K562 (cell line): ENCODE measurements at regions of chr2 and their contacts with region 1.

Region 1: GRCh38 chr2:32553829-32554432 is 73.9 kb upstream of the TTC27 start:
- DNase-seq: peak; percentile 35 to 61 (median 47)
- ATAC-seq: peak; percentile 93
- H3K4me3 ChIP-seq: no peak overlapping the region
- H3K27ac ChIP-seq: no peak overlapping the region
- H3K4me1 ChIP-seq: no peaks in the 10 kb centered on the region
- H3K27me3 ChIP-seq: no peaks in the 10 kb centered on the region
- CTCF ChIP-seq: peak; percentile 36 to 80 (median 44); a peak in 4 of 6 replicates
- EP300 ChIP-seq: no peak
- POLR2A ChIP-seq: no peak
- RAD21 ChIP-seq: peak; percentile 75 to 86

Region 2: DNA sequence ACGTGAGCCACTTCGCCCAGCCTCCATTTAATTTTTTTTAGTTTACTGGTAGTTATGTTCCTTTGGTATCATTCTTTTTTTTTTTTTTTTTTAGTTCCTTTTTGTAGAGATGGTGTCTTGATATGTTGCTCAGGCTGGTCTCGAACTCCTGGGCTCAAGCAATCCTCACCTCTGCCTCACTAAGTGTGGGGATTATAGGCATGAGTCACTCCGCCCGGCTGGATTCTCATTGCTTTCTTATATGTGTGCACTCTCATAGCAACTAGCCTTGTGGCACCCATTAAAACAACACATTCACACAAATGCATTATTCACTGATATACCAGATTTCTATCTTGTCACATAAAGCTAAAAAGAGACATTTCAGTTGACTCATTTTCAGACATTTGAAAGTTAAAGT is 78.2 kb after region 1 on chr2:
- CTCF ChIA-PET with region 1: no interaction called
- POLR2A ChIA-PET with region 1: no interaction called
- in situ Hi-C with region 1: no loop called
- intact Hi-C with region 1: loop called (anchors 5 kb)
- DNase-seq: peak in 3 of 4 experiments; percentile 20 to 75 (median 53)
- ATAC-seq: peak; percentile 32
- H3K4me3 ChIP-seq: no peak overlapping the region
- H3K27ac ChIP-seq: peak overlapping the region; percentile 19; the same call in 1 of the 3 replicates
- H3K4me1 ChIP-seq: peaks cover 13 to 17% of the 10 kb centered on the region in 2 experiments; a peak in 3 of 5 replicates
- H3K27me3 ChIP-seq: no peaks in the 10 kb centered on the region
- CTCF ChIP-seq: no peak
- EP300 ChIP-seq: no peak
- POLR2A ChIP-seq: no peak
- RAD21 ChIP-seq: no peak

Region 3: DNA sequence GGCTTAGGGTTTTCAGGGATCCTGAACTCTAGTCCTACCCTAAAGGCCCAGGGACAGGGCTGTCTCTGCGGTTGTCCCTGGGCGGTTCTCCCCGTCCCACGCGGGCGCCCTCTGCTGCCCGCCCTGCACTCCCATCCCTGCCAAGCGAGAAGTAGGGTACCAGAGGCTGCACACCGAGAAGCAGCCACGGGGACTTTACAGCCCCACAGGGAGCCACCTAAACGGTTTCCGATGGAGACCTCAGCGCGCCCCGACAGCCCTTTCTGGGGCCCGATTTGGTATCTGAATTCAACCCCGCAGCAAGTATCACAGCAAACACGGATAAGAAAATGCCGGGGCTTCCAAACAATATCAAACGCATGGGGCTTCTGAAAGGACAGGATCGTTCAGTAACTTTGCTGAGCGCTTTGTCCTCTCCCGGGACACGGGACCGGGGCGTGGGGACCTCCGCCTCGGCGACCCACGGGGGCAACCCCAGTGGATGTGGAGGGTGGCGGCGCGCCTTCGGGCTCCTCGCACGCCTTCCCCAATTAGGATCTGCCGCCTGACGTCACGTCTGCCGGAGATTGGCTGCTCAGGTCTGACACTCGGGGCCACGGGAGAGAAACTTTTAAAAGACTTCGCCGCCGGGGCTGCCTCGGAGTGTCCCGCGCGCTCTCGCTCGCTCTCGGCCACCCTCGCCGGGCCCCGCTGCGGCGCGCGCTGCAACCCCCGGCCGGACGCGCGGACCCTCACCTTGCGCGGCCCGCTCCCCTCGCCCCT is 392.6 kb after region 1 on chr2 and contains the start of gene LTBP1:
- CTCF ChIA-PET with region 1: no interaction called
- POLR2A ChIA-PET with region 1: no interaction called
- in situ Hi-C with region 1: no loop called
- intact Hi-C with region 1: loop called (anchors 2 kb)
- DNase-seq: peak; percentile 70 to 85 (median 77)
- ATAC-seq: peak; percentile 88
- H3K4me3 ChIP-seq: peak within 1 kb of the TSS; percentile 64
- H3K27ac ChIP-seq: peak within 1 kb of the TSS; percentile 70
- H3K4me1 ChIP-seq: peaks cover 27 to 29% of the 10 kb centered on the region in 2 experiments; a peak in 4 of 5 replicates
- H3K27me3 ChIP-seq: no peaks in the 10 kb centered on the region
- CTCF ChIP-seq: peak; percentile 79 to 92 (median 84)
- EP300 ChIP-seq: no peak
- POLR2A ChIP-seq: no peak
- RAD21 ChIP-seq: peak; percentile 74 to 82
- polyA plus RNA-seq, gene LTBP1: 4.3 to 5.2 TPM

Region 4: DNA sequence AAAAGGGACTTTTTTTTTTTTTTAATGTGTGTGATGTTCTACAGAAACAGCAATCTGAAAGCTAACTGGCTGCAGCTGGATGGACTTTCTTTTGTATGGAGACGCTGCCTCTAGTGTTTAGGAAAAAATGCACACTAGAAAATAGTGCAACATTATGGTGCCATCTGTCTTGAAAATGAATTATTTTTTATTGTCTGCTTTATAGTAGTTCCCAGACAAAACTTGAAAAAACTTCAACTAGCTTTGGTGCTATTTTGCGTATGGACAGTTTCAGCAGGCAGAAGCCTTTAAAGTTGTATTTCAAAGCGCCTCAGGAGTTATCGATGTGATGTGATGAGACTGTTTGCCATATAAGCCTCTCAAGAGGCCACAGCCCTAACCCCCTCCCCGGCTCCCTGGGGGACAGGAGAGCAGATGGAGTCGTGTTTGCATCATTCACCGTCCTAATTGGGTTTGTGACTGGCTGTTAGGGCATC is 479.7 kb after region 1 on chr2:
- CTCF ChIA-PET with region 1: interaction called, 14 read pairs
- POLR2A ChIA-PET with region 1: no interaction called
- in situ Hi-C with region 1: no loop called
- intact Hi-C with region 1: loop called (anchors 1 kb)
- DNase-seq: peak in 1 of 4 experiments; percentile 38
- ATAC-seq: peak; percentile 87
- H3K4me3 ChIP-seq: no peak overlapping the region
- H3K27ac ChIP-seq: no peak overlapping the region
- H3K4me1 ChIP-seq: no peaks in the 10 kb centered on the region; a peak in 1 of 5 replicates
- H3K27me3 ChIP-seq: no peaks in the 10 kb centered on the region
- CTCF ChIP-seq: peak; percentile 61 to 99 (median 97)
- EP300 ChIP-seq: no peak
- POLR2A ChIP-seq: no peak
- RAD21 ChIP-seq: peak; percentile 78 to 88

Region 5: DNA sequence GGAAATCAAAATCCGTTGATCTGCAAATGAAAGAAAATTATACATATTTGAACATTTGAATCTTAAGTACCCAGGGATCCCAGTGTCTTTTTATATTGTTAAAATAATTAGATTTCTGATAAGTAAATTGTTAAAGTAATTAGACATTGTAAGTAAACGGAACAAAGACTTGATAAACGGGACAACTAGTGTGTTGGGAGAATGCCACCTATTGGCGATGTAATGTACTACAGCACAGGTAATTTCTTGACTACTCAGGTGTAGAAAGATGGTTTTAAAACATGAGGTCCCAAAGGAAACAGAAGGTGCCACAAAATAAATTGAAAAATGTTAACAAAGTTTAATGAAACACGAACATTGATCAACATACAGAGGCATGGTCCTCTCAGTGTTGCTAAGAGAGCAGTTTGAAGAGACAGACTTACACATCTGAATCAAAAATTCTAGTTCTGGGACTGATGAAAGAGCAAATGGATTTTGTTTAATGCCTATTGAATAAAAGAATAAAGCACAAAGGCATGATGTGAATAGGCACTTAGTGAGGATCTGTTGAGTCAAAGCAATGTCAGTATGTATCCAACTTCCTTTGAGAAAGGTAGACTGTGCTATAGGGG is 819.1 kb after region 1 on chr2:
- CTCF ChIA-PET with region 1: interaction called, 6 read pairs
- POLR2A ChIA-PET with region 1: no interaction called
- in situ Hi-C with region 1: loop called (anchors 10 kb)
- intact Hi-C with region 1: loop called (anchors 5 kb)
- DNase-seq: peak; percentile 43 to 63 (median 58)
- ATAC-seq: peak; percentile 62
- H3K4me3 ChIP-seq: no peak overlapping the region
- H3K27ac ChIP-seq: no peak overlapping the region
- H3K4me1 ChIP-seq: no peaks in the 10 kb centered on the region; a peak in 1 of 5 replicates
- H3K27me3 ChIP-seq: no peaks in the 10 kb centered on the region
- CTCF ChIP-seq: peak; percentile 54 to 78 (median 73); a peak in 5 of 6 replicates
- EP300 ChIP-seq: no peak
- POLR2A ChIP-seq: no peak
- RAD21 ChIP-seq: peak; percentile 81 to 83

Region 6: GRCh38 chr2:33583194-33583938 is 1029.4 kb after region 1 on chr2:
- CTCF ChIA-PET with region 1: interaction called, 3 read pairs
- POLR2A ChIA-PET with region 1: no interaction called
- in situ Hi-C with region 1: no loop called
- intact Hi-C with region 1: loop called (anchors 10 kb)
- DNase-seq: peak; percentile 23 to 50 (median 34)
- ATAC-seq: peak; percentile 75
- H3K4me3 ChIP-seq: no peak overlapping the region
- H3K27ac ChIP-seq: no peak overlapping the region
- H3K4me1 ChIP-seq: no peaks in the 10 kb centered on the region
- H3K27me3 ChIP-seq: no peaks in the 10 kb centered on the region
- CTCF ChIP-seq: peak; percentile 59 to 83 (median 64); a peak in 5 of 6 replicates
- EP300 ChIP-seq: no peak
- POLR2A ChIP-seq: no peak
- RAD21 ChIP-seq: peak; percentile 92 to 96